Gastrocnemius medialis (tissue), 4 donors: ENCODE measurements at regions of chr16 and their contacts with region 1.

Region 1: DNA sequence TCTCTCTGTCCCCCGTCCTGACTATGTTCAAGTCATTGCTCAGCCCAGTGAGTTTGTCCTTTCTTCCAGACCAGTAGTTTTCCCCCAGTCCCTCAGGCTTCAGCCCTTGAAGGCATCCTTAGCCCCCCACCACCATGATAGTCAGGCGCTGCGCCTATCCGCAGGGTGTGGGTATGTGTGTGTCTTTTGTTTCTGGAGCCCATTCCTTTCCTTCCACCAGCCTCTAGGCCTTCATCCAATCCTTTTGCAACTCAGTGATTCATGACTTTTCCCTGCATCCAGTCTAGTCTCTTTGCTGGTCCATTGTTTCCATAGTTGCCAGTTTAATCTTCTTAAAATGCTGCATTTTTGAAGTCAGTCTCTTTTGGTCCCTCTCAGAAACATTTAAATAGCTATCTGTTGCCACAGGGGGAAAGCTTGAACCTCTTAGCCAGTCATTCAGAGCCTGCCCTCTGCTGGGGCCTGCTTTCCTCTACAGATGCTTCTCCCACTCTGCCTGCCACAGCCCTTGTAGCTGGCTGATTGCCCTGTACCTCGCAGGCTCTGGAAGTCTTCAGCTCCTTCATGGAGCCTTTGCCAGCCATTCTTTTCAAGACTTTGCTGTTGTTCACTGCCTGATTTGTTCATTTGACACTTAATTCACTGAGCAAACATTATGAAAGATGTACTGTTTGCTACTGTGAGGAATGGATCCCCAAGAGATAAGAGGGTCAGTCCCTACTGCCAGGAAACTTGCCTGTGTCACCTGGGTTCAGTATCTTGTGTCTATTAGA is 55.9 kb upstream of the ADCY7 start:
- DNase-seq: peak; percentile 36 to 63
- ATAC-seq: peak; percentile 48 to 82
- H3K4me3 ChIP-seq: no peak overlapping the region
- H3K27ac ChIP-seq: peak overlapping the region; percentile 35 to 72 (median 50)
- H3K4me1 ChIP-seq: peaks cover 39 to 40% of the 10 kb centered on the region in 2 donors
- H3K27me3 ChIP-seq: no peaks in the 10 kb centered on the region
- CTCF ChIP-seq: peak; percentile 15 to 58 (median 39)
- POLR2A ChIP-seq: no peak

Region 2: DNA sequence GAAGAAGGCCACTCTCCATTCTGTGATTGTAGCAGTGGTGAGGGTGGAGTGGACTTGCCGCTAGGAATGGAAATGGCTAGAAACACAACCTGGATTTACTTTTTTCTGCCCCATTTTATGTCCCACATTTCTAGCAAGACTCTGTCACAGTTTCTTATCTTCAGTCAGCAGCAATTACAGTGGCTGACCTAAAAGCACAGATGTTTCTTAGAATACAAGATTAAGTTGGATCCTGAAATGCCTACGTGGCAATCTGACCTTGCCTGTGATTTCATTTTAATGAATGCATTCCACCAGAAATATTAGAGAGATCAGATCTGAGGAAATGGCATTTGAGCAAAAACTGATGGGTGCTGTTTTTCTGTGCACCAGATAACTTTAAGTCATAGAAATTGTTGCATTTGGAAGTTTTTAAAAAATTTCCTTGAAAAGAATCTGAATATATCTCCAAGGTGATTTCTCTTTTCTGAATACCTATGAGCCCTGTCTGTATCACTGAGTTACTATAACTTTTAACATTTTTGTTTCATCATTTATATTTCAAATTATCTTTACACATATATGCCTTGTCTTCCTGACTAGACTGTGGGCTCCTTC is 139.3 kb before region 1 on chr16:
- in situ Hi-C with region 1: no loop called
- intact Hi-C with region 1: loop called (anchors 1 kb)
- DNase-seq: no peak
- ATAC-seq: no peak
- H3K4me3 ChIP-seq: no peak overlapping the region
- H3K27ac ChIP-seq: no peak overlapping the region
- H3K4me1 ChIP-seq: peaks cover 19 to 27% of the 10 kb centered on the region in 2 donors
- H3K27me3 ChIP-seq: no peaks in the 10 kb centered on the region
- CTCF ChIP-seq: no peak
- POLR2A ChIP-seq: no peak

Region 3: DNA sequence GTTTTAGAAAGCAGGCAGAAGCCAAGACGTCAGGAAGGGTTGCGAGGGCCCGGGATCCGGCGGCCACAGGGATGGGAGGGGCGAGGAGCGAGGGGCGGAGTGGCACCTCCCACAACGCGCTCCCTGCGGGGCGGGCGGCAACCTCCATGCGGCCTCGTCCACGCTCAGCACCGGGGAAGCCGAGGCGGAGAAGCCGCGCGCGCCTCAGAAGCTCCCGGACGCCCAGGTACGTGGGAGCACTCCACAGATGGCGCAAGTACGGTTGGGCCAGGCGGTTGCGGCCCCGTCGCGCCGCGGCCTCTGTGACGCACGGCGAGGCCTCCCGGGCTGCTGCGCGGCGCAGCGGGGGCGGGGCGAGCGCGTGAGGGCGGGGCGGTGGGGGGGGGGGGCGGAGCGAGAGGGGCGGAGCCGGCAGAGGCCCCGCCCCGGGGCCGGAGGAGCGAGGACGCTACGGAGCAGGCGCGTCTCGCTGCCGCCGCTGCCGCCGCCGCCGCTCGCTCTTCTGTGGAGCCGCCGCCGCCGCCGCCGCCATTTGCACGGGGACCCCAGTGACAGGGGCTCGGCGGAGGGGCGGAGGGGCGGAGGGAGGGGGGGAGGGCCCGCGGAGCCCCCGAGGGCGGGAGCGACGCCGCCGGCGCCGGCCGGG is 57.5 kb before region 1 on chr16 and contains the start of gene TENT4B:
- in situ Hi-C with region 1: loop called in 1 of 4 experiments (anchors 10 kb)
- intact Hi-C with region 1: loop called (anchors 2 kb)
- DNase-seq: peak; percentile 75 to 76
- ATAC-seq: peak; percentile 91 to 93
- H3K4me3 ChIP-seq: peak within 1 kb of the TSS; percentile 84 to 97 (median 90)
- H3K27ac ChIP-seq: peak within 1 kb of the TSS; percentile 91 to 99 (median 96)
- H3K4me1 ChIP-seq: peaks cover 20 to 41% of the 10 kb centered on the region in 2 donors
- H3K27me3 ChIP-seq: no peaks in the 10 kb centered on the region
- CTCF ChIP-seq: no peak
- POLR2A ChIP-seq: peak; percentile 62 to 65
- total RNA-seq, gene TENT4B: 5.7 to 12.2 (median 7.0) TPM

Region 4: DNA sequence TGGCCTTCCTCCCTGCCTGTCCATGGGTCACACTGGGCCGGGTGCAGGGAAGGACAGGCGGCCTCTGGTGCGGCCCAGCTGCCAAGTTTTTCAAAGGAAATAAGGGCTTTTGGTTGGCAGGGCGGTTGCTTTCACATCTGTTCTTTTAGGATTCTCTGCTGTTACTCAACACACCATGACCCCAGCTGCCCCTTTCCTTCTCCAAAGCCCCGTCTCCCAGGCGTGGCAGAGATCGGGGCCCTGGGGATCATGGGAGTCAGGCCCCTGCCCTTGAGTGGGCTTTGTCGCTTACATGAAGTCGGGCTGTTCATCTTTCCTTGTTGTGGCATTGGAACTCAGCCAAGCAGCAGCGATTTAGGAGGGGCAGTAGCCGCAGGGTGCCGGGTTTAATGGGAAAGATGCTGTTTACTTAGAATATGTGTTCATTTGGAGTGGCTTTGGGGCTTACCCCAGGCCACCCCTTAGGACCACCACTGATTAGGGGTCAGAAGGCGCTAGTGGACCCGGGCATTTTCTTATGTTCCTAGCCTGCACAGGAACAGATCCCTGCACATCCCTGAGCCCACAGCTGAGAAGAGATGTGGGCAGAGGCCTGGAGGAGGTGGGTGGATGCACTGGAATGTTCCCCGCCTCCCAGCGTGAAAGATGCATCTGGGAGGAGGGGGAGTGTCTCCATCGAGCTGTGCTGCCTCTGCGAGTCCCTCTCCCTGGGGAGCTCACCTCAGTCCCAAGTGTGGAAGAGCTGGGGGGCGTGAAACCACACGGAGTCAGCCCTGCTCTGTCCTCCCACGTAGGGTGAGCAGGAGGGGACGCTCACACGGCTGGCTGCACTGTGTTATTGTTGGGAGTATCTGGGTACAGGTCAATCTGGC is 49.1 kb after region 1 on chr16:
- in situ Hi-C with region 1: no loop called
- intact Hi-C with region 1: no loop called
- DNase-seq: peak; percentile 52 to 73
- ATAC-seq: peak; percentile 70 to 81
- H3K4me3 ChIP-seq: no peak overlapping the region
- H3K27ac ChIP-seq: peak overlapping the region; percentile 33 to 57 (median 44)
- H3K4me1 ChIP-seq: peaks cover 3 to 6% of the 10 kb centered on the region in 2 donors
- H3K27me3 ChIP-seq: peaks cover 0 to 15% (median 0%) of the 10 kb centered on the region in 3 donors
- CTCF ChIP-seq: no peak
- POLR2A ChIP-seq: no peak

Region 5: GRCh38 chr16:50354629-50355456 is 144.4 kb after region 1 on chr16:
- in situ Hi-C with region 1: loop called in 3 of 4 experiments (anchors 10 to 25 kb)
- intact Hi-C with region 1: loop called (anchors 2 kb)
- DNase-seq: no peak
- ATAC-seq: no peak
- H3K4me3 ChIP-seq: no peak overlapping the region
- H3K27ac ChIP-seq: no peak overlapping the region
- H3K4me1 ChIP-seq: peaks cover 2 to 3% of the 10 kb centered on the region in 2 donors
- H3K27me3 ChIP-seq: no peaks in the 10 kb centered on the region
- CTCF ChIP-seq: peak in 4 of 5 experiments; percentile 35 to 67 (median 42)
- POLR2A ChIP-seq: no peak

Region 6: GRCh38 chr16:50816901-50817555 is 606.6 kb after region 1 on chr16:
- in situ Hi-C with region 1: no loop called
- intact Hi-C with region 1: no loop called
- DNase-seq: no peak
- ATAC-seq: no peak
- H3K4me3 ChIP-seq: no peak overlapping the region
- H3K27ac ChIP-seq: no peak overlapping the region
- H3K4me1 ChIP-seq: no peaks in the 10 kb centered on the region
- H3K27me3 ChIP-seq: no peaks in the 10 kb centered on the region
- CTCF ChIP-seq: no peak
- POLR2A ChIP-seq: no peak